Mucosa of descending colon (tissue), 3 donors: ENCODE measurements at regions of chr1 and their contacts with region 1.

Region 1: DNA sequence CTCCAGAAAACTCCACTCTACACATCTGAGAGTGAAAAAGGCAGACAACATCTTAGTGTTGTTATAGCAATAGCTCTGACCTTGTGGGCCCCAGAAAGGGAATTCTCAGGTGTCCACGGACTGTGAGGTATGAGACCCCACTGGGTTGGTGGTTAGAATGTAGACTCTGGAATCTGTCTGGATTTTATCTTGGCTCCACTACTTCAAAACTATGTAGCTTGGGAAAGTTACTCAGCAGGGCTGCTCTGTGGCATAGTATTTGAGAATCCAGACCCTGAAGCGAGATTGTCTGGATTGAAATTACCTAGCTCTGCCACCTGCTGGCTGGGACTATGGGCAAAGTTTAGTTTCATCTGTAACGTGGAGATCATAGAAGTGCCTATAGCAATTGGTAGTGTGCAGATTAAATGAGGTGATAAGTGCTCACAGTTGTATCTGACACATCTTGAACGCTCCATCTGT is 25.8 kb downstream of the PRDM2 start:
- DNase-seq: peak in 2 of 3 donors; percentile 49 to 82
- ATAC-seq: peak; percentile 74
- H3K4me3 ChIP-seq: no peak overlapping the region
- H3K4me1 ChIP-seq: peaks cover 7% of the 10 kb centered on the region
- CTCF ChIP-seq: peak; percentile 11

Region 2: DNA sequence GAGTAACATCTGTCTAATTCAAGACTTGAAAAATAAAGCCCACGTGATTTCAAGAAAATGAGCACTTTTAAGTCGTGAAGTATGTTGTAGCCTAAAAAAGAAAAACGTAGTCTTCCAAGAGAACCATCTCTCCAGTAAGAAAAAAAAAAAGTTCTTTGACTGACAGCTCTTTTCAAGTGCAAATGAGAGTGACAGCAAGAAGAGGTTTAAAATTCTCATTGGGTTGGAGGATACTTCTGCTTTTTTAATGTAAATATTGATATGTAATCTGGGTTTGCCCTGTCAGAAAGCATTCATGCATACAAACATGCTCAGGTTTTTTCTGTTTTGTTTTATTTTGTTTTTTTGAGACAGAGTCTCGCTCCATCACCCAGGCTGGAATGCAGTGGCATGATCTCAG is 58.1 kb before region 1 on chr1:
- intact Hi-C with region 1: loop called in 1 of 2 experiments (anchors 5 kb)
- DNase-seq: no peak
- ATAC-seq: peak; percentile 25
- H3K4me3 ChIP-seq: no peak overlapping the region
- H3K4me1 ChIP-seq: no peaks in the 10 kb centered on the region
- CTCF ChIP-seq: no peak